Heart right ventricle (tissue), 16 donors: ENCODE measurements at regions of chr11 and their contacts with region 1.

Region 1: GRCh38 chr11:110092515-110093404 is at the start of gene ZC3H12C:
- DNase-seq: peak; percentile 85 to 87
- ATAC-seq: peak; percentile 78 to 91 (median 86)
- H3K4me3 ChIP-seq: peak within 1 kb of the TSS; percentile 69 to 86 (median 79)
- H3K27ac ChIP-seq: peak within 1 kb of the TSS; percentile 91 to 97 (median 95)
- H3K4me1 ChIP-seq: peaks cover 0 to 32% (median 26%) of the 10 kb centered on the region in 9 donors
- H3K27me3 ChIP-seq: peaks cover 0 to 6% (median 0%) of the 10 kb centered on the region in 7 donors
- CTCF ChIP-seq: peak in 7 of 9 donors; percentile 41 to 70 (median 56)
- total RNA-seq, gene ZC3H12C: 15.1 to 22.8 (median 20.9) TPM

Region 2: GRCh38 chr11:109275931-109276330 is 816.8 kb before region 1 on chr11:
- intact Hi-C with region 1: no loop called
- DNase-seq: no peak
- ATAC-seq: no peak
- H3K4me3 ChIP-seq: no peak overlapping the region
- H3K27ac ChIP-seq: no peak overlapping the region
- H3K4me1 ChIP-seq: no peaks in the 10 kb centered on the region
- H3K27me3 ChIP-seq: no peaks in the 10 kb centered on the region
- CTCF ChIP-seq: no peak

Region 3: GRCh38 chr11:109946322-109946846 is 146.4 kb before region 1 on chr11:
- intact Hi-C with region 1: loop called in 8 of 10 experiments (anchors 1 to 10 kb)
- DNase-seq: peak; percentile 74 to 88
- ATAC-seq: peak; percentile 90 to 100 (median 98)
- H3K4me3 ChIP-seq: peak overlapping the region in 8 of 10 donors; percentile 11 to 42 (median 35)
- H3K27ac ChIP-seq: peak overlapping the region in 9 of 10 donors; percentile 34 to 77 (median 52)
- H3K4me1 ChIP-seq: peaks cover 0 to 9% (median 4%) of the 10 kb centered on the region in 9 donors
- H3K27me3 ChIP-seq: no peaks in the 10 kb centered on the region
- CTCF ChIP-seq: peak; percentile 75 to 95 (median 92)

Region 4: DNA sequence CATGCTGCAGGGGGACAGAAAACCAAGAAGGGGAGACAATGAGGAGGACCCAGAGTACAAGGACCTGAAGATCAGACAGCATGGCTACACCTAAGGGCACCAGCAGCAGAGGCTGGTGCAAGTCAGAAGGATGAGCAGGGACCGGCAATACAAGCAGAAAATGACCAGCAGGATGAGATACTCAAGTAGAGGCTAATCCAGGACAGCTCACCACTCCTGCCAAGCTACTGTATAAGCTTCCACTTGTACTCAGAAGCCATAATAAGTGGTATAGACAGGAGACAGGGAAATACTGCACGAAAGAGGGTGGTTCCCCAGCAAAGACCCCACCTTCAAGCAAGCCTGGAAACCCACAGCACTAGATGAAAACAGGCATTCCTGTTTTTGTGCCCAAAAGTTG is 138.2 kb before region 1 on chr11:
- intact Hi-C with region 1: loop called in 5 of 10 experiments (anchors 5 to 10 kb)
- DNase-seq: no peak
- ATAC-seq: no peak
- H3K4me3 ChIP-seq: no peak overlapping the region
- H3K27ac ChIP-seq: no peak overlapping the region
- H3K4me1 ChIP-seq: no peaks in the 10 kb centered on the region
- H3K27me3 ChIP-seq: peaks cover 0 to 8% (median 0%) of the 10 kb centered on the region in 7 donors
- CTCF ChIP-seq: no peak

Region 5: GRCh38 chr11:109960831-109961230 is 131.9 kb before region 1 on chr11:
- intact Hi-C with region 1: loop called in 3 of 10 experiments (anchors 5 to 10 kb)
- DNase-seq: peak; percentile 49 to 61
- ATAC-seq: peak; percentile 71 to 95 (median 88)
- H3K4me3 ChIP-seq: no peak overlapping the region
- H3K27ac ChIP-seq: peak overlapping the region in 1 of 10 donors; percentile 49
- H3K4me1 ChIP-seq: peaks cover 0 to 11% (median 0%) of the 10 kb centered on the region in 9 donors
- H3K27me3 ChIP-seq: no peaks in the 10 kb centered on the region
- CTCF ChIP-seq: no peak

Region 6: GRCh38 chr11:109971184-109971523 is 121.6 kb before region 1 on chr11:
- intact Hi-C with region 1: loop called in 2 of 10 experiments (anchors 10 kb)
- DNase-seq: peak in 1 of 2 donors; percentile 13
- ATAC-seq: peak; percentile 41 to 84 (median 69)
- H3K4me3 ChIP-seq: no peak overlapping the region
- H3K27ac ChIP-seq: peak overlapping the region in 4 of 10 donors; percentile 13 to 42 (median 35)
- H3K4me1 ChIP-seq: peaks cover 0 to 35% (median 25%) of the 10 kb centered on the region in 9 donors
- H3K27me3 ChIP-seq: no peaks in the 10 kb centered on the region
- CTCF ChIP-seq: no peak

Region 7: GRCh38 chr11:110015695-110016094 is 77.1 kb before region 1 on chr11:
- intact Hi-C with region 1: no loop called
- DNase-seq: no peak
- ATAC-seq: no peak
- H3K4me3 ChIP-seq: no peak overlapping the region
- H3K27ac ChIP-seq: no peak overlapping the region
- H3K4me1 ChIP-seq: no peaks in the 10 kb centered on the region
- H3K27me3 ChIP-seq: no peaks in the 10 kb centered on the region
- CTCF ChIP-seq: no peak

Region 8: DNA sequence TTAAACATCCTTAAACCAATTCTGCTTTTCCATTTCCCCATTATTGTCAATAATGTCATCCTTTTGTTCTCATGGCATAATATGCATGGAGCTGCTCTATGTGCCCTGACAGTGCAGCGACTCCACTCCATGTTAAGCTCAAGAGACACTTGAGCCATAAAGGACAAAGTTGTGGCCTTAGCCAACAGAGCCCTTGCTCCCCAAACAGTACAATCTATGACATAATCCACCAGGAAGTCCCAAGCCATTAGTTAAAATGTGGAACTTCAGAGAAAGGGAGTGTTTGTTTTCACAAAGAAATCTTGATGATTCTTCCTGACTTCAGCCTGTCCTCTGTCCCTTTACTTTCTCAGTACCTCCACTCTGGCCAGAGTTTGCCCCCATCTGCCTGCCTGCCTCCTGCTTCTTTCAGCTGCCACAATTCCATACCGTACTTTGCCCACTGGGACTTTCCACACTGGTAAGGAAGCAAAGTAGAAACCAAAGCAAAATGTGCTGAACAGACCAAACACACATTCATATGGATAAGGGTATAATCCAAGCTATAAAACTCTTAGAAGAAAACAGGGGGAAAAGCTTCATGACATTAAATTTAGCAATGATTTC is 45.9 kb before region 1 on chr11:
- intact Hi-C with region 1: no loop called
- DNase-seq: no peak
- ATAC-seq: no peak
- H3K4me3 ChIP-seq: no peak overlapping the region
- H3K27ac ChIP-seq: no peak overlapping the region
- H3K4me1 ChIP-seq: no peaks in the 10 kb centered on the region
- H3K27me3 ChIP-seq: no peaks in the 10 kb centered on the region
- CTCF ChIP-seq: no peak

Region 9: GRCh38 chr11:110376711-110377324 is 284.1 kb after region 1 on chr11:
- intact Hi-C with region 1: loop called in 1 of 10 experiments (anchors 5 kb)
- DNase-seq: peak; percentile 51 to 85
- ATAC-seq: peak; percentile 68 to 92 (median 86)
- H3K4me3 ChIP-seq: peak overlapping the region in 4 of 10 donors; percentile 12 to 23 (median 20)
- H3K27ac ChIP-seq: peak overlapping the region in 7 of 10 donors; percentile 2 to 60 (median 34)
- H3K4me1 ChIP-seq: peaks cover 0 to 36% (median 13%) of the 10 kb centered on the region in 9 donors
- H3K27me3 ChIP-seq: no peaks in the 10 kb centered on the region
- CTCF ChIP-seq: peak; percentile 63 to 93 (median 83)